ENCODE measurements at regions of chr15 and their contacts with region 1.

Region 1: GRCh38 chr15:45307230-45307924 is 55.3 kb downstream of the SLC28A2 start:
- DNase-seq: no peak
- ATAC-seq: peak; percentile 75 to 83
- H3K4me3 ChIP-seq: peak overlapping the region; percentile 29
- H3K27ac ChIP-seq: no peak overlapping the region
- H3K4me1 ChIP-seq: no peaks in the 10 kb centered on the region
- H3K27me3 ChIP-seq: no peaks in the 10 kb centered on the region

Region 2: GRCh38 chr15:45236816-45237516 is 70.4 kb before region 1 on chr15:
- intact Hi-C with region 1: no loop called
- DNase-seq: no peak
- ATAC-seq: no peak
- H3K4me3 ChIP-seq: no peak overlapping the region
- H3K27ac ChIP-seq: peak overlapping the region; percentile 26
- H3K4me1 ChIP-seq: peaks cover 3% of the 10 kb centered on the region
- H3K27me3 ChIP-seq: no peaks in the 10 kb centered on the region

Region 3: GRCh38 chr15:45391746-45392583 is 84.6 kb after region 1 on chr15:
- intact Hi-C with region 1: loop called in 3 of 4 experiments (anchors 5 kb)
- DNase-seq: no peak
- ATAC-seq: peak; percentile 25 to 41
- H3K4me3 ChIP-seq: no peak overlapping the region
- H3K27ac ChIP-seq: no peak overlapping the region
- H3K4me1 ChIP-seq: no peaks in the 10 kb centered on the region
- H3K27me3 ChIP-seq: no peaks in the 10 kb centered on the region

Measured in right cardiac atrium (tissue), 5 donors.